Panc1 (cell line): ENCODE measurements at regions of chr20 and their contacts with region 1.

Region 1: GRCh38 chr20:31968291-31969126 is 558 bp downstream of the XKR7 start:
- DNase-seq: no peak
- ATAC-seq: peak; percentile 62
- H3K4me3 ChIP-seq: peak overlapping the region; percentile 43 to 45
- H3K27ac ChIP-seq: peak overlapping the region; percentile 93
- H3K4me1 ChIP-seq: peaks cover 56% of the 10 kb centered on the region
- H3K27me3 ChIP-seq: peaks cover 9% of the 10 kb centered on the region
- CTCF ChIP-seq: no peak

Region 2: DNA sequence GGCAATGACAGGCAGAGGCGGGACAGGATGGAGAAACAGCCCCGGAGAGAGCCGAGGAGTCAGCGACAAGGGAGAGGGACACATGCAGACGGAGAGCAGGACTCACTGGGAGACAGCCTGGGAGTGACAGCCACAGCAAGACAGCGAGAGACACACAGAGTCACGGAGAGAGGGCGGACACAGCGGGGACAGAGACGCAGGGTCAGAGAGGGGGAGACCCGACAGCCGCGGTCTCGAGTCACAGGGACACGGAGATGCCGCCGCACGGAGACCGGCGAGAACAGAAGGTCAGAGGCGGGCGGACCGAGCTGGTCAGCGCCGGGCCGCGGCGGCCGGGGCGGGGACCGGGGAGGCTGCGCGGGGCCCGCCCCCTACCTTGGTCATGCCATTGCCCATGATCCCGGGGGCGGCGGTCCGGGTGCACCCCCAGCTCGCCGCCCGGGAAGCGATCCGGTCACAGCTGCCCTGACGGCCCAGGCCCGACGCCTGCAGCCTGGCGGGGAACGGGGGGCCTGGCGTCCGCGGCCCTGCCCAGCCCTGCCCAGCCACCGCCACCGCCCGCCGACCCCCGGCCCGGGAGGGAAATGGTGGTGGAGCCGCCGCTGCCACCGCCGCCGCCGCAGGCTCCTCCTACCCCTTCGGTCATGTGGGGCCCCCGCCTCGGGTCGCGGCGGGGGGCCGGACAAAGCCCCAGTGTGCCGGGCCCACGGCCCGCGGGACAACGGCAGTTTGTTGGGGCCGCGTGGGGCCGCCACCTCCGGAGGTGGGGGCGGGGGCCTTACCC is 98.4 kb before region 1 on chr20 and contains the starts of genes DUSP15 and TTLL9:
- CTCF ChIA-PET with region 1: no interaction called
- POLR2A ChIA-PET with region 1: interaction called, 15 read pairs
- in situ Hi-C with region 1: no loop called
- intact Hi-C with region 1: no loop called
- DNase-seq: no peak
- ATAC-seq: peak; percentile 87
- H3K4me3 ChIP-seq: peak within 1 kb of the TSS; percentile 52 to 66
- H3K27ac ChIP-seq: peak within 1 kb of the TSS; percentile 52
- H3K4me1 ChIP-seq: no peaks in the 10 kb centered on the region; the same call in 1 of the 2 replicates
- H3K27me3 ChIP-seq: peaks cover 3% of the 10 kb centered on the region; the same call in 1 of the 2 replicates
- CTCF ChIP-seq: no peak
- total RNA-seq, gene DUSP15: 23.6 TPM
- total RNA-seq, gene TTLL9: 2.1 TPM

Region 3: GRCh38 chr20:32018269-32019074 is 50.0 kb after region 1 on chr20:
- CTCF ChIA-PET with region 1: interaction called, 4 read pairs
- POLR2A ChIA-PET with region 1: no interaction called
- in situ Hi-C with region 1: no loop called
- intact Hi-C with region 1: loop called (anchors 5 kb)
- DNase-seq: no peak
- ATAC-seq: peak; percentile 91
- H3K4me3 ChIP-seq: peak overlapping the region; percentile 52 to 65
- H3K27ac ChIP-seq: peak overlapping the region; percentile 52; the same call in 1 of the 2 replicates
- H3K4me1 ChIP-seq: peaks cover 19% of the 10 kb centered on the region
- H3K27me3 ChIP-seq: peaks cover 11% of the 10 kb centered on the region; the same call in 1 of the 2 replicates
- CTCF ChIP-seq: no peak